ENCODE measurements at regions of chr1 and their contacts with region 1.

Region 1: DNA sequence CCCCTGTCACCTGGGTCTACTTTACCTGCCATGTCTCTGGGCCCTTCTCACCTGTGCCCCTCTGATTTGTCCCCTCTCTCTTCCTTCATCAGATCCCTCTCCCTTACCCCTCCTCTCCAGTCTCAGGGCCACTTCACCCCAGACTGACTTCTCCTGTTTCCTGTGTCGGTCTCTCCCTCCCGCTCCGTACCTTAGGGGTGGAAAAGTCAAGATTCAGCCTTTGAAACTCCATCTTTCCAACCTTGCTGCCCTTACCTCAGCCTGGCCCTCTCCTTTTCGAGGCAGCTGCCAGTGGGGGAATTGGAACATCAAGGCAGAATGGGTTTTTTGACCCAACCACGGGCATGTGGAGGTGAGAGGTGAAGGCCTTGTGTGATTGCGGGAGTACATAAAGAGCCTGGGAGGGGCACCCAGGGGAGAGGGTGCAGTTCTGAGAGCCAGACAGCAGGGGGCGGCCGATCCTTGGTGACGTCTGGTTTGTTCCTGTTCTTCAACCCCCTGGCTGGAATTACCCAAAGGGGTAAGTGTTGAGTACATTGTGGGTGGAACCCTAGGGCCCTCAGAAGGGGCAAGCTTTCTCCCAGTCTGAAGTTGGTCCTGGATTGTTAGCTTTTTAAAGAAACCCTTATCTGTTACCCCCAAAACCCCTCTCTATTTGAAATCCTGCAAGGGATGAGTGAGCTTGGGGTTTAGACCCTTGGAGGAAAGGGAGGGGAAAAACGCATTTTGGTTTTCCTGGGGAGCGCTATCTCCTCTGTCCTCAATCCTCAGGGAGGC is 12.3 kb upstream of the DMBX1 start:
- DNase-seq: no peak
- H3K4me3 ChIP-seq: no peak overlapping the region
- CTCF ChIP-seq: peak; percentile 94

Region 2: GRCh38 chr1:46370214-46370633 is 107.1 kb before region 1 on chr1:
- CTCF ChIA-PET with region 1: no interaction called
- POLR2A ChIA-PET with region 1: no interaction called
- DNase-seq: no peak
- H3K4me3 ChIP-seq: no peak overlapping the region
- CTCF ChIP-seq: no peak

Region 3: GRCh38 chr1:46489638-46490405 is 12.5 kb after region 1 on chr1 and contains the start of gene DMBX1:
- CTCF ChIA-PET with region 1: interaction called, 32 read pairs
- POLR2A ChIA-PET with region 1: no interaction called
- DNase-seq: no peak
- H3K4me3 ChIP-seq: no peak within 1 kb of the TSS
- CTCF ChIP-seq: no peak

Region 4: DNA sequence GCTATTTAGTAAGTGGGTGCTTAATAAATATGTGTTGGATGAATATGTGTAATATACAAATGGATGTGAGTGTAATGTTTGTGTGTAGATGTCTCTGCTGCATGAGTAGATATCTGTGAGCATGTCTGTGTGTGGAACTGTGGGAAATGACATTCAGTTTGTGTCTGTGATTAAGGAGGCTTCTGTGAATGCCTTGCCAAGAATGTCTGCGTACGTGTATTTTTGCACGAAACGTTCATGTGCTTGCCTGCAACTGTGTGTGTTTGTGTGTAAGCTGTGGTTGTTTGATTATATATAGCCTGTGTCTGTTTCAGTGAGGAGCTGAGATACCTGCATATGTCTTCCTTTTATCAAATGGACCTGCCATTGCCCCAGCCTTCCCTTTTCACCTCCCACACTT is 26.1 kb after region 1 on chr1:
- CTCF ChIA-PET with region 1: interaction called, 16 read pairs
- POLR2A ChIA-PET with region 1: no interaction called
- DNase-seq: no peak
- H3K4me3 ChIP-seq: no peak overlapping the region
- CTCF ChIP-seq: no peak

Region 5: GRCh38 chr1:46508757-46509156 is 31.4 kb after region 1 on chr1:
- CTCF ChIA-PET with region 1: interaction called, 16 read pairs
- POLR2A ChIA-PET with region 1: no interaction called
- DNase-seq: no peak
- H3K4me3 ChIP-seq: no peak overlapping the region
- CTCF ChIP-seq: no peak

Region 6: GRCh38 chr1:46522184-46522968 is 45.0 kb after region 1 on chr1:
- CTCF ChIA-PET with region 1: interaction called, 398 read pairs
- POLR2A ChIA-PET with region 1: no interaction called
- DNase-seq: no peak
- H3K4me3 ChIP-seq: no peak overlapping the region
- CTCF ChIP-seq: no peak

Region 7: DNA sequence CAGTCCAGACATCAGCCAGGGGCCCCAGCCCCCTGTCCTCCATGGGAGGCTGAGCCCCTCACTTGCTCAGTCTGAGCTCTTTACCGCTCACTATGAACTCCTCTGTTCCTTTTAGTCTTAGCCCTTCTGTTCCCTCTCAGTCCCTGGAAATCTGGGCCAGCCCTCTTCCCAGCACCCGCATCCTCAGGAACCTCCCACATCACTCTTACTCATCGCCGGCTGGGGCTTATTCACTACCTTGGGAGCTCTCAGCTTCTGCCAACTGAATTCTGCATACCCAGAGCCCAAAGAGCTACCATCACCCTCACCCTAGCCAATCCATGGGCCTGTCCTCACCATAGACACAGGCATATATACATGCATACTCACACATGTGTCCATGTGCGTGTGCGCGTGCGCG is 62.6 kb after region 1 on chr1:
- CTCF ChIA-PET with region 1: interaction called, 35 read pairs
- POLR2A ChIA-PET with region 1: no interaction called
- DNase-seq: no peak
- H3K4me3 ChIP-seq: no peak overlapping the region
- CTCF ChIP-seq: no peak

Region 8: GRCh38 chr1:46547481-46548383 is 70.4 kb after region 1 on chr1:
- CTCF ChIA-PET with region 1: interaction called, 21 read pairs
- POLR2A ChIA-PET with region 1: no interaction called
- DNase-seq: no peak
- H3K4me3 ChIP-seq: no peak overlapping the region
- CTCF ChIP-seq: peak; percentile 32